CD4-positive, alpha-beta memory T cell (primary cell): ENCODE measurements at regions of chr22 and their contacts with region 1.

Region 1: GRCh38 chr22:38766076-38766777 is 10.4 kb upstream of the SUN2 start:
- DNase-seq: peak in 4 of 5 donors; percentile 32 to 43 (median 38)
- H3K4me3 ChIP-seq: no peak overlapping the region
- H3K4me3 Mint-ChIP-seq: no peak overlapping the region
- H3K27ac ChIP-seq: no peak overlapping the region
- H3K27ac Mint-ChIP-seq: peak overlapping the region in 1 of 7 donors; percentile 68
- H3K4me1 ChIP-seq: peaks cover 13% of the 10 kb centered on the region
- H3K4me1 Mint-ChIP-seq: peaks cover 3 to 18% (median 12%) of the 10 kb centered on the region in 4 donors
- H3K27me3 ChIP-seq: no peaks in the 10 kb centered on the region
- H3K27me3 Mint-ChIP-seq: no peaks in the 10 kb centered on the region

Region 2: DNA sequence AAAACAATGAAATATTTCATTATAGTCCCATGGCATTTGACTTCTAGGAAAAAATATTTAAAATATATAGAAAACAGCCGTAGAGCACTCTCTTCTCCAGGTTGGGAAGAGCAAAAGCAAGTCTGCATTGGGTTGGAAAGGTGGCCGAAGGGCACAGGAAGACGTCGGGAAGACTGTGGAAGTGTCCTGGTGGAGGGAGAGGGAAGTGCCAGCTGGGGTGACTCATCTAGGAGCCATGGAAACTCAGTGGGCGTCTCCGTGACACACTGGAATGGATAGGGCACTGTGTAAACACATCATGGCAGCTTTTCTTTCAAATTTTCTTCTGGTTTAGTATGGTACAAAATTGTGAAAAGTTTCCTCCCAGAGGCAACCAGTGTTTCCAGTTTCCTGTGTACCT is 47.8 kb before region 1 on chr22:
- CTCF ChIA-PET with region 1: interaction called, 10 read pairs
- POLR2A ChIA-PET with region 1: interaction called, 1,746 read pairs
- intact Hi-C with region 1: no loop called
- DNase-seq: peak in 1 of 5 donors; percentile 35
- H3K4me3 ChIP-seq: no peak overlapping the region
- H3K4me3 Mint-ChIP-seq: no peak overlapping the region
- H3K27ac ChIP-seq: no peak overlapping the region
- H3K27ac Mint-ChIP-seq: peak overlapping the region in 2 of 7 donors; percentile 36 to 46
- H3K4me1 ChIP-seq: peaks cover 17% of the 10 kb centered on the region
- H3K4me1 Mint-ChIP-seq: peaks cover 15 to 21% (median 18%) of the 10 kb centered on the region in 4 donors
- H3K27me3 ChIP-seq: no peaks in the 10 kb centered on the region
- H3K27me3 Mint-ChIP-seq: no peaks in the 10 kb centered on the region

Region 3: DNA sequence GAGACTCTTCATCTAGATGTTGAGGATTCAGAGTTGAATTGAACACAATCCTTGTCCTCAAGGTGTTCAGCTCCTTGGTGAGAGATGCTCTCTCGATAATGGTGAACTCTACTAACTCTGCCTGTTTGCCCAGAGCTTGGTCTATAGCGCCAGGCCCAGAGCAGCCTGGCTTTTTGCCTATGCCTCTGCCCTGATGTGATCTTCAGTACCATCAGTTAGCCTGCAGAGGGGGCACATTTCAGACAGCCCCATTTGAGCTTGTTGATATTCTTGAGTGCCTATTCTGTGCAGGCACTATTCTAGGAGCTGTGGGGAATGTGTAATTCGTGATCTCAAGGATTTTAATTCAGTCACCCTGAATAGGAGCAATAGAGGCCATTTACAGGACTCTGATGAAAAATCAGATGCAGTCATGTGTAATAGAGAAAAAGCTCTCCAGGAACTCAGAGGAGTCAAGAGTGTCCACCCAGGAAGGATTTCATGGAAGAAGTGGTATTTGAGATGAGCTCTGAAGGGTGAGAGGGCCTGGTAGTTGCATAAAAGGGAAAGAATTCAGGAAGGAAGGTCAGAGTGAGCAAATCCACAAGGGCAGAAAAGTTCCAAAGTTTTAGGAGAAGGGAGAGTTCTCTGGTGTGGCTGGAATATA is 41.2 kb before region 1 on chr22:
- CTCF ChIA-PET with region 1: interaction called, 74 read pairs
- POLR2A ChIA-PET with region 1: interaction called, 1,746 read pairs
- intact Hi-C with region 1: no loop called
- DNase-seq: peak in 3 of 5 donors; percentile 52 to 57 (median 54)
- H3K4me3 ChIP-seq: no peak overlapping the region
- H3K4me3 Mint-ChIP-seq: peak overlapping the region in 1 of 8 donors; percentile 63
- H3K27ac ChIP-seq: no peak overlapping the region
- H3K27ac Mint-ChIP-seq: peak overlapping the region; percentile 58 to 88 (median 77)
- H3K4me1 ChIP-seq: no peaks in the 10 kb centered on the region
- H3K4me1 Mint-ChIP-seq: peaks cover 6 to 14% (median 9%) of the 10 kb centered on the region in 4 donors
- H3K27me3 ChIP-seq: no peaks in the 10 kb centered on the region
- H3K27me3 Mint-ChIP-seq: no peaks in the 10 kb centered on the region

Region 4: GRCh38 chr22:38744981-38745380 is 21.2 kb before region 1 on chr22:
- CTCF ChIA-PET with region 1: interaction called, 42 read pairs
- POLR2A ChIA-PET with region 1: interaction called, 1,746 read pairs
- intact Hi-C with region 1: no loop called
- DNase-seq: peak in 1 of 5 donors; percentile 9
- H3K4me3 ChIP-seq: no peak overlapping the region
- H3K4me3 Mint-ChIP-seq: peak overlapping the region in 1 of 8 donors; percentile 13
- H3K27ac ChIP-seq: no peak overlapping the region
- H3K27ac Mint-ChIP-seq: peak overlapping the region; percentile 27 to 83 (median 61)
- H3K4me1 ChIP-seq: peaks cover 68% of the 10 kb centered on the region
- H3K4me1 Mint-ChIP-seq: peaks cover 10 to 51% (median 25%) of the 10 kb centered on the region in 4 donors
- H3K27me3 ChIP-seq: no peaks in the 10 kb centered on the region
- H3K27me3 Mint-ChIP-seq: no peaks in the 10 kb centered on the region

Region 5: DNA sequence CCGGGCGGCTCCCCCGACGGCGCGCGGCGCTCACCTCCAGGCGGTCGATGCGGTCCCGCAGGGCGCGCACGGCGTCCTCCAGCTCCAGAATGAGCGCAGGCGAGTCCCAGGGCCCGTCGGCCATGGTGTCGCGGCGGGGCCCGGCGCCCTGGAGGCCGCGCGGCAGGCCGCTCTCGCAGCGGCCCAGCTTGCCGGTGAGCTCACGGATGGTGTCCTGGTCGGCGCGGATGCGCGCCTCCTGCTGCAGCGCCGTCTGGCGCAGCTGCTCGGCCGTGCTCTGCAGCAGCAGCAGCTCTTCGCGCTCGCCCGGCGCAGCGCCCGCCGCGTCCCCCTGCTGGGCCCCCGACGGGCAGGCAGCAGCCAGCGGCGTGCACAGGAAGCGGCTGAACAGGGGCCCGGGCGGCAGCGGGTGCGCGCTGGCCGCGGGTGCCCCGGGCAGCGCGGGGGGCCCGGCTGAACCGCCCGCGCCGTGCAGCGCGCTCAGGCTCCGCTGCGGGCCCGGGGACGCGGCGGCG is 77.0 kb after region 1 on chr22:
- CTCF ChIA-PET with region 1: interaction called, 18 read pairs
- POLR2A ChIA-PET with region 1: interaction called, 6 read pairs
- intact Hi-C with region 1: no loop called
- DNase-seq: peak; percentile 56 to 66 (median 61)
- H3K4me3 ChIP-seq: peak overlapping the region in 1 of 2 donors; percentile 50
- H3K4me3 Mint-ChIP-seq: peak overlapping the region in 1 of 8 donors; percentile 32
- H3K27ac ChIP-seq: no peak overlapping the region
- H3K27ac Mint-ChIP-seq: peak overlapping the region in 1 of 7 donors; percentile 69
- H3K4me1 ChIP-seq: peaks cover 20% of the 10 kb centered on the region
- H3K4me1 Mint-ChIP-seq: peaks cover 7 to 31% (median 17%) of the 10 kb centered on the region in 4 donors
- H3K27me3 ChIP-seq: peaks cover 9% of the 10 kb centered on the region
- H3K27me3 Mint-ChIP-seq: peaks cover 0 to 12% of the 10 kb centered on the region in 2 donors

Region 6: DNA sequence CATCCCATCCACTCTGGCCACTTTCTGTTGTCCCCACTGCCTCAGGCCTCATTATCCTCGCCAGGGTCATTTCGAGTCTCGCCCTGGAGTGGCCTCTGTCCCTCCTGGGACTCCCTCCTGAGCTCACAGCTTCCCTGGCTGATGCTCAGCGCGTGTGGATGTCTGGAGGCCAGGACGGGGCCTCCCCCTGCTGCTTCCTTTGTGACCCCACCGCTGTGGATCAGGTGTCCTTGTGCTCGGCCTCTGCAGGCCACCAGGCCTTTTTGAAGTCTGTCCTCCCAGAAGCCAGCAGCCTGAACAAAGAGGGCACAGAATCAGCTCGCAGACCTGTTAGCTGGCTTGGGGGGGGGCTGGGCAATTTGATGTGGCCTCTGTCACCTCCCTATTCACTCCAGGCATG is 92.3 kb after region 1 on chr22:
- CTCF ChIA-PET with region 1: no interaction called
- POLR2A ChIA-PET with region 1: no interaction called
- intact Hi-C with region 1: no loop called
- DNase-seq: no peak
- H3K4me3 ChIP-seq: no peak overlapping the region
- H3K4me3 Mint-ChIP-seq: no peak overlapping the region
- H3K27ac ChIP-seq: no peak overlapping the region
- H3K27ac Mint-ChIP-seq: no peak overlapping the region
- H3K4me1 ChIP-seq: no peaks in the 10 kb centered on the region
- H3K4me1 Mint-ChIP-seq: peaks cover 0 to 7% (median 3%) of the 10 kb centered on the region in 4 donors
- H3K27me3 ChIP-seq: no peaks in the 10 kb centered on the region
- H3K27me3 Mint-ChIP-seq: peaks cover 0 to 4% of the 10 kb centered on the region in 2 donors